CD4-positive, alpha-beta memory T cell (primary cell): ENCODE measurements at regions of chr18 and their contacts with region 1.

Region 1: DNA sequence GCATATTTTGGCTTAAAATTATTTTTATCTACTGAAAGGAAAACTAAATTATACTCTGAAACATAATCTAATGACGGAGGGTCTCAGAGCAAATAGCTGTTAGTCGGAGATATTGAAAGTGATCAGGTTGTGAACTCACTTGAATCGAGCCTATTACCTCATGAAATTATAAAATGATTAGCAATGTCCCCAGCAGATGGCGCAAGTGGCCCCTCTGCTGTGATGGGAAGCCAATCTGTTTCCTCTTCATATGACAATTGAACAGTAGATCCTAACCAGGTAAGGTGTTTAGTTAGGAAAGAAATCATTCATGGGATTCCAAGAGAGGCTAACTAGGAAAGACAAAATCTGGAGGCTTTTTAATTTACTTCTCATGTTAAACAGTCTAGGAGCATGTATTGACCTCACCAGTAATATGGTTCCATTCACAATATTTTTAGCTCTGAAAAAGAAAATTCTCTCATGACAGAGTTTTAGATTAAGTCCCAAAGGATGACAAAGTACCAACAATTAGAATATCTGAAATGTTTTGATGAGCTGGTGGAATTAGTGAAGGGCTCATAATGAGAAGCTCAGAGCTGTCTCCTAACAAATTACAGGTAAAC is 29.9 kb upstream of the MPPE1 start:
- DNase-seq: peak; percentile 53 to 72 (median 65)
- H3K4me3 ChIP-seq: no peak overlapping the region
- H3K4me3 Mint-ChIP-seq: no peak overlapping the region
- H3K27ac ChIP-seq: no peak overlapping the region
- H3K27ac Mint-ChIP-seq: peak overlapping the region in 1 of 7 donors; percentile 6
- H3K4me1 ChIP-seq: no peaks in the 10 kb centered on the region
- H3K4me1 Mint-ChIP-seq: peaks cover 0 to 5% (median 0%) of the 10 kb centered on the region in 4 donors
- H3K27me3 ChIP-seq: no peaks in the 10 kb centered on the region
- H3K27me3 Mint-ChIP-seq: no peaks in the 10 kb centered on the region

Region 2: DNA sequence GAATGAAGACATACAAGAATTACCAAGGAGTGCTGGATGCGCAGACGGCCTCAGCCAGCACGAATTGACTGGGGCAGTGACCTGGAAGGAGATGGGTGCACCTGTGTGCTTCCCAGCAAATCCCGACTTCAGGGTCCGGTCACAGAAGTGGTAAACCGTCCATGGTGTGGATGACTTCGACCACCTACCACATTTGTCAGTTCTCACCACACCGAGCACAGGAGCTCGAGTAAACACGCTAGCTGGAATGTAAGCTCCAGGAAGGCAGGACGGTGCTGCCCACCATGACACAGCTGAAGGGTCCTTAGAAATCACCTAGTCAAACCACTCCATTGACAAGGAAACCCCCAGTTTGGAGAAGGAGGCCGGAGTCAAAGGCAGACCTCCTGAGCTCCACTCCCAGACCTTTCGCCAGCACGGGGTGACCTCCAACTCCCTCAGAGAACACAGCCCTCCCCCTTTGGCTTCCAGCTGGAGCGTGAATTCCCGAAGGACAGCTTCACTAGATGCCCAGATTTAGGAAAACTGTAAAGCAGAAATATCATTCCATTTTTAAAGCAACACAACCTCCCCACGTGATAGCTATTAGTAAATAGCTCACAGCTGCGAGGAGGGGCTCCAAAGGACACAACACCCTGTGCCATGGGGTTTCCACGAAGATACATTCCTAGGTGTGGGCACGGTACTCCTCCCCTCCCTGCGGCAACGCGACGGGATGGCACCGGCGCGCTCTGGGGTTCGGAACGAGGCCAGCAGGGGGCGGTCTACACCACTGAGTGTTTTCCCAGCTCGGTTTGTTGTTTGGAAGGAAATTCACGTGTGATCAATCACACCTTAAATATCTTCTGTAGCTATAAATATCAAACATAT is 283.0 kb before region 1 on chr18:
- CTCF ChIA-PET with region 1: interaction called, 3 read pairs
- POLR2A ChIA-PET with region 1: no interaction called
- intact Hi-C with region 1: loop called (anchors 5 kb)
- DNase-seq: peak in 3 of 5 donors; percentile 5 to 16 (median 13)
- H3K4me3 ChIP-seq: peak overlapping the region in 1 of 2 donors; percentile 8
- H3K4me3 Mint-ChIP-seq: no peak overlapping the region
- H3K27ac ChIP-seq: no peak overlapping the region
- H3K27ac Mint-ChIP-seq: no peak overlapping the region
- H3K4me1 ChIP-seq: no peaks in the 10 kb centered on the region
- H3K4me1 Mint-ChIP-seq: peaks cover 0 to 6% (median 3%) of the 10 kb centered on the region in 4 donors
- H3K27me3 ChIP-seq: no peaks in the 10 kb centered on the region
- H3K27me3 Mint-ChIP-seq: peaks cover 14 to 45% of the 10 kb centered on the region in 2 donors

Region 3: GRCh38 chr18:11908182-11909060 is 29.6 kb before region 1 on chr18 and contains the start of gene MPPE1:
- CTCF ChIA-PET with region 1: interaction called, 4 read pairs
- POLR2A ChIA-PET with region 1: interaction called, 4 read pairs
- intact Hi-C with region 1: loop called (anchors 1 kb)
- DNase-seq: peak; percentile 82 to 87 (median 83)
- H3K4me3 ChIP-seq: peak within 1 kb of the TSS; percentile 86 to 93
- H3K4me3 Mint-ChIP-seq: peak within 1 kb of the TSS; percentile 94 to 96 (median 96)
- H3K27ac ChIP-seq: peak within 1 kb of the TSS; percentile 93
- H3K27ac Mint-ChIP-seq: peak within 1 kb of the TSS; percentile 89 to 98 (median 96)
- H3K4me1 ChIP-seq: peaks cover 20% of the 10 kb centered on the region
- H3K4me1 Mint-ChIP-seq: peaks cover 11 to 37% (median 21%) of the 10 kb centered on the region in 4 donors
- H3K27me3 ChIP-seq: no peaks in the 10 kb centered on the region
- H3K27me3 Mint-ChIP-seq: no peaks in the 10 kb centered on the region
- total RNA-seq, gene MPPE1: 75.3 to 79.7 TPM

Region 4: DNA sequence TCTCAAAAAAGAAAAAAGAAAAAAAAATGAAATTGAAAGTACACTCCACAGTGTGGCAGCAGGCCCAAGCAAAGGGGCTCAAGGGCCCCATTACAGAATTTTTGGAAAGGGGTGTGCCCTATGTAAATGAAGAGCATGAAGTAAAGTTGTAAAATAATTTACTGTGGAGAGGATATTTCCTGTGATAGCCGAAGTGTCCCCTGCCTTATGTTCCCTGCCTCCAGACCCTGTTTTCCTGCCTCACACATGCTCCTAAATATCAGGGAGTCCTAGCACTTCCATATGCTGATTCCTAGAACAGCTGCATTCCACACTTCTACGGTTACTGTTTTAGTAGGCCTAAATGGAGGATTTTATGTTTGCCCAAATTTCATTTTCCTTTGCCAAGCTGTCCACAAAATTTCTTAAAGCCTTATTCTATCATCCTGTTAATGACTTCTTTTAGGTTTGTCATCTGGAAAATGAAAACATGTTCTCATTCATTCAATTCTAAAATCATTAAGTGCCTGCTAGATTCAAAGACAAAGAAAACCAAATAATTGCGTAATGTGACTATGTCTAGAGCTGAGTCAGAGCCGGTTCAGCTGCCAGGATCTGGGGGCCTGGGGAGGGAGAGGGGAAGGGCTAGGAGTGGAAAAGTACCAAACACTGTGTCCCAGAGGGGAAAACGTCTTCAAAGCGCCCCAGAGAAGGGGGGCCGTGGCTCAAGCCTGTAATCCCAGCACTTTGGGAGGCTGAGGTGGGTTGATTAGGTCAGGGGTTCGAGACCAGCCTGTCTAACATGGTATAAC is 17.5 kb after region 1 on chr18:
- CTCF ChIA-PET with region 1: interaction called, 25 read pairs
- POLR2A ChIA-PET with region 1: no interaction called
- intact Hi-C with region 1: no loop called
- DNase-seq: no peak
- H3K4me3 ChIP-seq: no peak overlapping the region
- H3K4me3 Mint-ChIP-seq: no peak overlapping the region
- H3K27ac ChIP-seq: no peak overlapping the region
- H3K27ac Mint-ChIP-seq: no peak overlapping the region
- H3K4me1 ChIP-seq: no peaks in the 10 kb centered on the region
- H3K4me1 Mint-ChIP-seq: no peaks in the 10 kb centered on the region
- H3K27me3 ChIP-seq: no peaks in the 10 kb centered on the region
- H3K27me3 Mint-ChIP-seq: peaks cover 2 to 3% of the 10 kb centered on the region in 2 donors

Region 5: DNA sequence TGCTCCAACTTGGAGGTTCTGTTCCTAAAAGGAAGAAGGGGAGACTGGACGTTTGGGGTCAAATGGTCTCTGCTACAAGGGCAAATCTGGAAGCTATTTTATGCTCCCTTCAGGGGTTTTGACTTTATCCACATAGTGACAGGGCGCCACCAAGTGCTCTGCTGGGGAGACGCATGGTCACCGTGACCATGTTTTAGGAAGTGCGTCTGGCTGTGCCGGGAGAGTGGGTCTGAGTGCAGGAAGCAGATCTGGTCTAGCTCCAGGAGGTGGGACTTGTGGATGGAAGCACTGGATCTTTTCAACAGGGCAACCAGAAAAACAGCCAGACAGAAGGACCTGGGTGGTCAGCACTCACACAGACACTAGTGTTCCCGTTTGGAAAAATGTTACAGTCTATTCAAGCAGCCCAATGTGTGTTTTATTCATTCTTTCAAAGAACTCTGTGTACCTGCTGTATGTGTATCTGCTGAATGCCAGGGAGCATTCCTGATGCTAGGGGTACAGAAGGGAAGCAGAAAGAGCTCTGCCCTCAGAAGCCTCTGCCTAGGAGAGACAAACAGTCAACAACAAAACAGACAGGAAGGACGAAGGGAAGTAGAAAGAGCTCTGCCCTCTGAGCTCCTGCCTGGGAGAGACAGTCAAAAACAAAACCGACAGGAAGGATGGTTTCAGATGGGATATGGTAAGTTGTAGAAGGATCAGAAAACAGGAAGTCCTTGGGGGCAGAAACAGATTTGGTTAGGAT is 57.6 kb after region 1 on chr18:
- CTCF ChIA-PET with region 1: interaction called, 665 read pairs
- POLR2A ChIA-PET with region 1: interaction called, 10 read pairs
- intact Hi-C with region 1: loop called (anchors 1 kb)
- DNase-seq: peak; percentile 45 to 56 (median 50)
- H3K4me3 ChIP-seq: peak overlapping the region in 1 of 2 donors; percentile 26
- H3K4me3 Mint-ChIP-seq: peak overlapping the region in 7 of 8 donors; percentile 12 to 80 (median 65)
- H3K27ac ChIP-seq: peak overlapping the region; percentile 5
- H3K27ac Mint-ChIP-seq: peak overlapping the region in 5 of 7 donors; percentile 5 to 86 (median 70)
- H3K4me1 ChIP-seq: peaks cover 12% of the 10 kb centered on the region
- H3K4me1 Mint-ChIP-seq: peaks cover 8 to 16% (median 9%) of the 10 kb centered on the region in 4 donors
- H3K27me3 ChIP-seq: no peaks in the 10 kb centered on the region
- H3K27me3 Mint-ChIP-seq: no peaks in the 10 kb centered on the region

Region 6: DNA sequence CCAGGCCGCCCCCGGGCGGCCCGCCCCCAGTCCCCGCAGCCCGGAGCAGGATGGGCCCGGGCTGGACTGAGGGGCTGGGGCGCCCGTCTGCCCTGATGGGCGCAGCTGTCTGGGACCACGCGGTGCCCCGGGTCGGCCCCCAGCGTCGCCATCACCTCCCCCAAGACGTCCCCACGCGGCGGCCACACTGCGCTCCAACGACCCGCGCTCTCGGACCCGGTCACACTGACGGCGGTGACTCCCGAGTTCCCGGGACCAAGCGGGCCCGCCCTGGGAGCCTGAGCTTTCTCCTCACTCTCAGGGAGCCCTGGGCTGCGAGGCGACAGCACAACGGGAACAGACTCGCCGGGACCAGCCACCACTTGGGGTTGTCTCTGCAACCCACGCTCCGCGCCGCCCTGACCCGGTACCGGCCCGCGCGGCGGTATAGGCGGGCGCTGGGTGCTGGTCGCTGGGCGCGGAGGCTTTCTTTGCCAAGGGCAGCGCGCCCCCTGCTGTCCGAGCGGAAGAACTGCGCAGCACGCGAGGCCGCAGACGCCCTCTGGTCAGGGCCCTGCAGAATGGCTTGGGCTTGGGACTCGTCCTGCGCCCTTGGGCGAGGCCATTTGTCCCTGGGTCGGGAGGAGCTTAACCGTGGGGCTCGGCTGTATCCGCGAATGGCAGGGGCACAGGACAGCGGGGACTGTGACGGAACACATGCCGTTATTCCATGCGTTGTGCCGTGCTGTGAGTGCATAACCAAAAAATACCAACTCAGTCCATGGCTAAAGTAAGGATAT is 100.9 kb after region 1 on chr18:
- CTCF ChIA-PET with region 1: interaction called, 132 read pairs
- POLR2A ChIA-PET with region 1: no interaction called
- intact Hi-C with region 1: loop called (anchors 1 kb)
- DNase-seq: peak; percentile 48 to 74 (median 67)
- H3K4me3 ChIP-seq: peak overlapping the region in 1 of 2 donors; percentile 12
- H3K4me3 Mint-ChIP-seq: peak overlapping the region; percentile 39 to 79 (median 66)
- H3K27ac ChIP-seq: no peak overlapping the region
- H3K27ac Mint-ChIP-seq: no peak overlapping the region
- H3K4me1 ChIP-seq: peaks cover 4% of the 10 kb centered on the region
- H3K4me1 Mint-ChIP-seq: peaks cover 0 to 4% (median under 1%) of the 10 kb centered on the region in 4 donors
- H3K27me3 ChIP-seq: peaks cover 6% of the 10 kb centered on the region
- H3K27me3 Mint-ChIP-seq: peaks cover 7 to 20% of the 10 kb centered on the region in 2 donors